Activated CD4-positive, alpha-beta T cell treated with anti-CD3 and anti-CD28 coated beads, Interleukin-2, amount 10 ng/mL, durations not matched to agents 24 days and 14 days (primary cell): ENCODE measurements at regions of chr20 and their contacts with region 1.

Region 1: DNA sequence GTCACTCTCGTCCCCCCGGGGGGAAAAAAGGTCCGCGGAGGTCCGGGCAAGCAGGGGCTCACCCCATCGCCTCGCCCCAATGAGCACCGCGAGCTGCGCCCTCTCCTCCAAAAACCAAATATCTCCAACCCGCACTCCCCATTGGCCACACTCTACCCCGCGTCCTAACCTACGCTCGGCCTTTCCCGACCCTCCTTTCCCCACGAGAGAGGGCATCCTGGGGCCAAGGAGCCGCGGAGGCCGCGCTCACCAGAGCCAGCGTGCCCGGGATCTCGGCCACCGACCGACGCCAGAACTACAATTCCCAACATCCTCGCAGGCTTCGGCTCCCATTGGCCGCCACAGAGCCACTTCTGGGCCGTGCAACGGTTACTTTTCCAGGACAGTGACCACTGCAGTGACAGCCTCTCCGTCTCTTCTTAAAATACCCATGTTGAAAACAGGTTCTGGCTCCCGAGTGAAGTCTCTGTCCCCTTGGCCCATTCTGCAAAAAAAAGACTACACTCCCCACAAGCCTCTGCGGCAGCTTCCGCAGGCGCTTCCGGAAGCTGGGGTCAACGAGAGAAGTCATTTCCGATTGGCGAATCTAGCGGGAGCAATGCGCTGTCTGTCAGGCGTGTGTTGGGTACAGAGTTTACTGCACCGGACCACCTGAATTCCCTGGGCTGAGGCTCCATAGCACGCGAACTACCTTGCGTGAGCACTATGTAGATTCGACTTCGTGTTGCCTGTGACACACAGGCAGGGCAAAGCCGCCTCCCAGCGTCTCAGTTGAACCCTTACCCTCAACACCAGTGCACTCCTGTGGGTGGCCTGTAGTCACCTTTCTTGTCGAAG is at the start of gene ZNF343:
- DNase-seq: peak; percentile 94
- H3K4me3 Mint-ChIP-seq: peak within 1 kb of the TSS; percentile 99
- H3K27ac Mint-ChIP-seq: peak within 1 kb of the TSS; percentile 98
- H3K4me1 Mint-ChIP-seq: peaks cover 13% of the 10 kb centered on the region
- H3K27me3 Mint-ChIP-seq: peaks cover 20% of the 10 kb centered on the region
- total RNA-seq, gene ZNF343: 18.9 and 21.4 TPM in 2 replicates

Region 2: DNA sequence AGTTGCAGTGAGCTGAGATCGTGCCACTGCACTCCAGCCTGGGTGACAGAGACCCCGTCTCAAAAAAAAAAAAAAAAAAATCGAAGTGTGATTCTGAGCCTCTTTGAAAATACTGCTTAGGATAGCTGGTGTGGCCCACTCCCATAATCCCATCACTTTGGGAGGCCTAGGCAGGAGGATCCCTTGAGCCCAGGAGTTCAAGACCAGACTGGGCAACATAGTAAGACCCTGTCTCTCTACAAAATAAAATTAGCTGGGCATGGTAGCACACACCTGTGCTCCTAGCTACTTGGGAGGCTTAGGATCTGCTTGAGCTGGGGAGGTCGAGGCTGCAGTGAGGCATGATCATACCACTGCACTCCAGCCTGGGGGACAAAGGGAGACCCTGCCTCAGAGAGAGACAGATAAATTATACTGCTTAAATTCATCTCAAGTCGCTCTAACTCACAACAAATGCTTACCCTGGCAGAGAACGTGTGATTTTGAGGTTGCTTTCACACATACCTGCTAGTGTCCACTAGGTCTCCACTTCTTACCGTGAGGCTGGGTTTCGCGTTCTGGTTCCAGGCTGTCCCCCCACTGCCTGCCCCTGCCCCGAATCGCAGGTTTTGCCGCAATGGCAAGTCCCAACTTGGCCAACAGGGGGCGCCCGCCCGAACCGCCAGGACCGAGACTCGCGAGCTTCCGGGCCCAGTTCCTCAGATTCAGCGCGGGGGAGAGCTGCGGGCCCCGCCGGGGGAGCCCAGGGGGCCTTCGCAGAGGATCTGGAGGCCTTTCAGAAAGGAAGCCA is 15.3 kb after region 1 on chr20:
- intact Hi-C with region 1: loop called (anchors 1 kb)
- DNase-seq: peak; percentile 98
- H3K4me3 Mint-ChIP-seq: peak overlapping the region; percentile 85
- H3K27ac Mint-ChIP-seq: peak overlapping the region; percentile 93
- H3K4me1 Mint-ChIP-seq: peaks cover 20% of the 10 kb centered on the region
- H3K27me3 Mint-ChIP-seq: peaks cover 5% of the 10 kb centered on the region

Region 3: DNA sequence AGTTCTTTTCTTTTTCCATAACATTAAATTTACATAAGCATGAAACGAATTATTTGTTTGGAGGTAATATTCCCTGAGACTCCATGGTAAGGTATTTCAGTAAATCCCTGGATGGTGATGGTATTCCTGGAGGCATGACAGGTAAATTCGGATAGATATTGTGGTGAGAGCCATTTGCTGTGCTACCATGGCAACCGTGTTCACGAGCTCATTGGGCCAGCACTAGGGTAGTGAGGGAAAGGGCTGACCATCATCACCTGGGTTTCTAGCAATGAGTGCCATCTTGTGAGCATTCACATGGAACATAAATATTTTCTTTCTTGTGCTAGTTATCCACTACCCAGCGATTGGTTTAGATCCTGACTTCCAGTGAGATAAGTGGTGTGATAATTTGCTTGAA is 482.7 kb after region 1 on chr20:
- intact Hi-C with region 1: no loop called
- DNase-seq: no peak
- H3K4me3 Mint-ChIP-seq: no peak overlapping the region
- H3K27ac Mint-ChIP-seq: no peak overlapping the region
- H3K4me1 Mint-ChIP-seq: peaks cover 36% of the 10 kb centered on the region
- H3K27me3 Mint-ChIP-seq: no peaks in the 10 kb centered on the region